ENCODE measurements at regions of chr1 and their contacts with region 1.

Region 1: GRCh38 chr1:87953732-87954344 is 625.2 kb downstream of the LMO4 start:
- DNase-seq: peak; percentile 11 to 85
- H3K4me3 ChIP-seq: no peak overlapping the region
- H3K27ac ChIP-seq: no peak overlapping the region
- H3K4me1 ChIP-seq: peaks cover 5 to 14% of the 10 kb centered on the region in 2 donors
- H3K27me3 ChIP-seq: no peaks in the 10 kb centered on the region
- CTCF ChIP-seq: peak; percentile 52 to 74 (median 57)

Region 2: GRCh38 chr1:86395771-86396497 is 1557.9 kb before region 1 on chr1 and contains the start of gene ODF2L:
- intact Hi-C with region 1: loop called (anchors 10 kb)
- DNase-seq: peak; percentile 78 to 94
- H3K4me3 ChIP-seq: peak within 1 kb of the TSS; percentile 52 to 76
- H3K27ac ChIP-seq: peak within 1 kb of the TSS; percentile 57 to 70
- H3K4me1 ChIP-seq: peaks cover 0 to 4% of the 10 kb centered on the region in 2 donors
- H3K27me3 ChIP-seq: no peaks in the 10 kb centered on the region
- CTCF ChIP-seq: no peak
- total RNA-seq, gene ODF2L: 6.2 TPM

Region 3: DNA sequence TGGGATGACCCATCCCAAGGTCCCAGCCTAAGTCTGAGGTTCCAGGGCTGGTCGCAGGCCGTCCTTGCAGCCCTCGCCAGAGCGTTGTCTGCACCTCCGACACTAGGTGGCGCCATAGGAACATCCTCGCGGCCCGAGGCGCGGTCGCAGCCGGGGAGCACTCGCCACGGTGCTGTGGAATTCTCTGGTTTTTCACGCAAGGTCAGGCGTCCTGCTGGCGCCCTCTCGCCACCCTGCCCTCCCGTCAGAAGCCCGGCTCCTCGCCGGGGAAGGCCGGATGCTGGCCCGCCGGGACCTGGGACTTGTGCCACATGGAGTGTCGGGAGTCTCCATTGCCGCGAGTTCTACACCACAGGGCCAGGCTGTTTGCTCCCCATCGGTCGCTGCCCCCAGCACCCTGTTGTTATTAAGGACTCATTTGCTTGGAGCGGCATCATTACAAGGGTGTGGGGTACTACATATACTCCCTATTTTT is 822.0 kb before region 1 on chr1:
- intact Hi-C with region 1: loop called (anchors 5 kb)
- DNase-seq: peak in 1 of 2 donors; percentile 85
- H3K4me3 ChIP-seq: peak overlapping the region; percentile 62 to 77
- H3K27ac ChIP-seq: peak overlapping the region; percentile 59 to 62
- H3K4me1 ChIP-seq: peaks cover 6 to 7% of the 10 kb centered on the region in 2 donors
- H3K27me3 ChIP-seq: no peaks in the 10 kb centered on the region
- CTCF ChIP-seq: peak; percentile 75 to 97 (median 95)

Region 4: DNA sequence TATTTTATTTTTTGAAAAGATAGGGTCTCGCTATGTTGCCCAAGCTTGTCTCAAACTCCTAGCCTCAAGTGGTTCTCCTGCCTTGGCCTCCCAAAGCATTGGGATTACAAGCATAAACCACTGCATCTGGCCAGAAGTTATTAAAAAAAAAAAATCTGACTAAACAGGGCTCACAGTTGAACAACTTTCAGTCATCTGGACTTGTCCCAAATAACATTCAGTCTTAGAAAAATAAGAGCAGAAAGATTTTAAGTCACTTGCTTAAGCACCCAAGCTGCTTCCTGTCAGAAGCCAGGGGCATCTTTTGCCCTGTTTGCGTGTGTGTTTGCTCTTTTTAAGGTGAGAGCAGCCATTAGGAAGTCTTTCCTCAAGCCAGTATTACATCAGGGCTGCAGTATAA is 338.3 kb before region 1 on chr1:
- intact Hi-C with region 1: loop called (anchors 10 kb)
- DNase-seq: no peak
- H3K4me3 ChIP-seq: no peak overlapping the region
- H3K27ac ChIP-seq: peak overlapping the region; percentile 16 to 65
- H3K4me1 ChIP-seq: peaks cover 0 to 13% of the 10 kb centered on the region in 2 donors
- H3K27me3 ChIP-seq: no peaks in the 10 kb centered on the region
- CTCF ChIP-seq: no peak

Region 5: GRCh38 chr1:87644579-87645190 is 309.2 kb before region 1 on chr1:
- intact Hi-C with region 1: loop called (anchors 10 kb)
- DNase-seq: no peak
- H3K4me3 ChIP-seq: no peak overlapping the region
- H3K27ac ChIP-seq: peak overlapping the region; percentile 33 to 48
- H3K4me1 ChIP-seq: peaks cover 0 to 5% of the 10 kb centered on the region in 2 donors
- H3K27me3 ChIP-seq: no peaks in the 10 kb centered on the region
- CTCF ChIP-seq: no peak

Region 6: DNA sequence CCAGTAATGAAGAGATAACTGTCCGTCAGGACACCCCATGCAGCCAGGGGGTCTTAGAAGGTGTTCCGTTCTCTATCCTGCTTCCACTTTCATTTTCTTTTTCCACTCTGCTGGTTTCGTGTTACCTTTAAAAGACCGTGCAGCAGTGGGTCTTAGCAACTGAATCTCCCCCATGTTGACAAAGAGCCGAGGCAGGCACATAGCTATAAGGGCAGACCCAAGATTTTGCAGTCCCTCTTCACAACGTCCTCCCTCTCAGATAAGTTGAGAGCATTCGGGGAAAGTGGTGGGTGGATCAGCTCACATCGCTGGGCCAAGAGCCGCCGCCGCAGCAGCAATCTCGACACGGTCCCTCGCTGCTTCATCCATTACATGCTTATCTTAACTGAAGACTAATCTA is 269.6 kb before region 1 on chr1:
- intact Hi-C with region 1: loop called (anchors 5 kb)
- DNase-seq: no peak
- H3K4me3 ChIP-seq: peak overlapping the region; percentile 57 to 65
- H3K27ac ChIP-seq: peak overlapping the region; percentile 52 to 53
- H3K4me1 ChIP-seq: no peaks in the 10 kb centered on the region
- H3K27me3 ChIP-seq: no peaks in the 10 kb centered on the region
- CTCF ChIP-seq: no peak

Region 7: DNA sequence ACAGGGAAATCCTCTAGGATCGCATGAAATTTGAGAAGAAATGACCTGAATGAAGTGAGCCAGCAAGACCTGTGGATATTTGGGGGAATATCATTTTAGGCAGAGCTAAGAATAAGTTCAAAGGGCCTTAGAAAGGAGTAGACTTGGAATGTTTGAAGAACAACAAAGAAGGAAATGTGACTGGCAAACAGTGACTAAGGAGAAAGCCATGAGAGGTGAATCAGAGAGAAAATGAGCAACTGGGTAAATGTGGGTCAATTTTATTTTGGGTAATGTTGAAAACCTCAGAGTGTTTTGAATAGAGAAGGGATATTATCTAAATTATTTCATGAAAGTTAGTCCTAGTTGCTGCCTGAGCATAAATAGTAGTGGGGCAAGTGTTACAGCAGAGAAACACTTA is 47.6 kb after region 1 on chr1:
- intact Hi-C with region 1: no loop called
- DNase-seq: no peak
- H3K4me3 ChIP-seq: no peak overlapping the region
- H3K27ac ChIP-seq: peak overlapping the region in 1 of 2 donors; percentile 6
- H3K4me1 ChIP-seq: peaks cover 0 to 3% of the 10 kb centered on the region in 2 donors
- H3K27me3 ChIP-seq: no peaks in the 10 kb centered on the region
- CTCF ChIP-seq: no peak

Region 8: GRCh38 chr1:88284066-88284465 is 330.2 kb after region 1 on chr1:
- intact Hi-C with region 1: no loop called
- DNase-seq: no peak
- H3K4me3 ChIP-seq: no peak overlapping the region
- H3K27ac ChIP-seq: no peak overlapping the region
- H3K4me1 ChIP-seq: no peaks in the 10 kb centered on the region
- H3K27me3 ChIP-seq: no peaks in the 10 kb centered on the region
- CTCF ChIP-seq: no peak

Measured in ascending aorta (tissue), 2 donors.